HEK293T (cell line): ENCODE measurements at regions of chr4 and their contacts with region 1.

Region 1: DNA sequence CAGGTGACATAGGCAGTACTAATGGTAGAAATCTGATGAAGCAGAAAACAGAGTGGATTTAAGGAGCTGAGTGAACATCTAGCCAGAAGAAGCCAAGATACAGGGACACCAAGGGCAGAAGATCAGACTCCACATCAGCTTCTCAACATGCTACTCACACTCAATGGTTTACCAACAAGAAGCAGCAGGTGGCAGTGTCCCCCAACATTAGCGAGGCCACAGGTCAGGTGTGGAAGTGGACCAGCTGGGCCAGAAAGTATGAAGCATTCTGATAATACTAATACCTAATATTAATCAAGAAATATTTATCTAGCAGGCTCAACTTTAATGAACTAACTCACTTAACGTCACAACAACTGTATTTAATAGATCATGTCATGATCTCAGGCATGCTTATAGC is 73.4 kb upstream of the TTC29 start:
- DNase-seq: peak; percentile 53

Region 2: GRCh38 chr4:146932111-146932510 is 87.0 kb before region 1 on chr4:
- CTCF ChIA-PET with region 1: no interaction called
- POLR2A ChIA-PET with region 1: no interaction called
- DNase-seq: no peak

Region 3: GRCh38 chr4:147029296-147029695 is 10.2 kb after region 1 on chr4:
- CTCF ChIA-PET with region 1: no interaction called
- POLR2A ChIA-PET with region 1: no interaction called
- DNase-seq: no peak

Region 4: DNA sequence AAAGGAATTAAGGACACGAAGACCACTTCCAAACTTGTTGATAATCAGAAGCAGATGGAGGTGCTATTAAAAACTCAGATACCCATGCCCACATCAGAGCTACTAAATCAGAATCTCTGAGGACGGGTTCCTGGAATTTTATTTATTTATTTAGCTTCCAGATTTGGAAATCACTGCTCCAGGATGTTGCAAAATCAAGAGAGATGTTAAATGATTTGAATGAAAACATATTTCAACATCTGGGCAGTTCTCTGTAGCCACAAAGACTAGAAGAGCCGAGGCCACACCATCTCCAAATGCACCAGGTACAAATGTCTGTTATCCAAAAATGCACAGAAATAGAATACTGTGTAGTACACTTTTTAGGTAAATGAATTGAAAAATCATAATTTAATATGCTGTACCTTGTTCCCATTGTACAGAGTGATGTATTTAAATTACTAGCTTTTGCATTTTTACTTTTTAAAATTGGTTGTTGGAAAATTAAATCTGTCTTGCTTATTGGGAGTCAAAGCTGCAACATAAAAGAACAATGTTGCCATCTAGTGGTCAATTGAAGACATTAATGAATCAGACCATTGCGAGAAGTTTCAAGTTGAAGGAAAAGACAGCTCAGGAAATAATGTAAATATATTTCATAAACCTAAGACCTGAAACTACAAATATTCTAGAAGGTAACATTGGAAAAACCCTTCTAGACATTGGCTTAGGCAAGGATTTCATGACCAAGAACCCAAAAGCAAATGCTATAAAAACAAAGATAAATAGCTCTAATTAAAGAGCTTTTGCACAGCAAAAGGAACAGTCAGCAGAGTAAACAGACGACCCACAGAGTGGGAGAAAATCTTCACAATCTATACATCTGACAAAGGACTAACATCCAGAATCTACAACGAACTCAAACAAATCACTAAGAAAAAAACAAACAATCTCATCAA is 77.9 kb after region 1 on chr4:
- CTCF ChIA-PET with region 1: interaction called, 62 read pairs
- POLR2A ChIA-PET with region 1: no interaction called
- DNase-seq: peak; percentile 37